H1 (cell line): ENCODE measurements at regions of chr6 and their contacts with region 1.

Region 1: GRCh38 chr6:4920914-4921410 is 82.9 kb downstream of the RPP40 start:
- DNase-seq: no peak
- H3K4me3 ChIP-seq: no peak overlapping the region
- H3K27ac ChIP-seq: no peak overlapping the region
- H3K4me1 ChIP-seq: peaks cover 2 to 20% (median 18%) of the 10 kb centered on the region in 4 experiments; a peak in 6 of 7 replicates
- H3K27me3 ChIP-seq: no peaks in the 10 kb centered on the region
- CTCF ChIP-seq: no peak
- EP300 ChIP-seq: no peak
- POLR2A ChIP-seq: no peak; a peak in 1 of 3 replicates
- RAD21 ChIP-seq: no peak

Region 2: GRCh38 chr6:4714961-4715501 is 205.9 kb before region 1 on chr6:
- CTCF ChIA-PET with region 1: no interaction called
- POLR2A ChIA-PET with region 1: no interaction called
- DNase-seq: peak in 1 of 2 experiments; percentile 20
- H3K4me3 ChIP-seq: no peak overlapping the region
- H3K27ac ChIP-seq: no peak overlapping the region
- H3K4me1 ChIP-seq: no peaks in the 10 kb centered on the region
- H3K27me3 ChIP-seq: no peaks in the 10 kb centered on the region
- CTCF ChIP-seq: no peak
- EP300 ChIP-seq: no peak
- POLR2A ChIP-seq: no peak
- RAD21 ChIP-seq: no peak

Region 3: DNA sequence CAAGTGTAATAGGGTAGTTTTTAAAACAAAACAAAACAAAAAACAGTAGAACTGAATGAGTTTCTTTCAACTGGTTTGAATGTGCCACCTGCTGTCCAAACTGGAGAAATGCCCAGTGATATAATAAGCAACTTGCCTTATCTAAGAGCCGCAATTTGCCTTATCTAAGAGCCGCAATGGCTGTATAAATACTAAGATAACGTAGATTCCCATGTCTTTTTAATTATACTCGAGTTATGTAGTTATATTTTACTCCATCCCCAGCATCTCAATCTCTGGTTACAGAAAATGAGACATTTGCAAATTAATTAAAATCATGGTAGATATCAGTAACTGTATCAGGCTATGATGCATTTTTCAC is 15.7 kb after region 1 on chr6:
- CTCF ChIA-PET with region 1: interaction called, 19 read pairs
- POLR2A ChIA-PET with region 1: no interaction called
- DNase-seq: no peak
- H3K4me3 ChIP-seq: no peak overlapping the region
- H3K27ac ChIP-seq: no peak overlapping the region
- H3K4me1 ChIP-seq: peaks cover 3 to 8% (median 5%) of the 10 kb centered on the region in 4 experiments
- H3K27me3 ChIP-seq: no peaks in the 10 kb centered on the region
- CTCF ChIP-seq: peak in 2 of 3 experiments; percentile 16 to 41; a peak in 2 of 4 replicates
- EP300 ChIP-seq: no peak
- POLR2A ChIP-seq: no peak
- RAD21 ChIP-seq: peak; percentile 58 to 59

Region 4: DNA sequence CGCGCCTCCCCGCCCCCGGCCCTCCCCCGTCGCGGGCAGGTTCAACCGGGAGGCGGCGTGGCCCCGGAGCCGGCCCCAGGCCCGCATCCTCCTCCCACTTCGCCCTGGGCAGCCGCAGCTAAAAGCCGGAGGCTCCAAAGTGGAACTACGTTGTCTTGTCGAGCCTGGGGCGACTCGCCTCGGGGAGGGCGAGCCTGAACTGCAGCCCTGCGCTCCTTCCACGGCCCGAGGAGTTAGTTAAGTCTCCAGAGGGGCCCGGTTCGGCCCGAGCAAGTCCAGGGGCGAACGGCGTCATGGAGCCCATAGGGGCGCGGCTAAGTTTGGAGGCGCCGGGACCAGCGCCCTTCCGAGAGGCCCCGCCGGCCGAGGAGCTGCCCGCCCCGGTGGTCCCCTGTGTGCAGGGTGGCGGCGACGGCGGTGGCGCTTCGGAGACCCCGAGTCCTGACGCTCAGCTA is 164.3 kb after region 1 on chr6 and contains the start of gene PPP1R3G:
- CTCF ChIA-PET with region 1: no interaction called
- POLR2A ChIA-PET with region 1: no interaction called
- DNase-seq: no peak
- H3K4me3 ChIP-seq: peak within 1 kb of the TSS; percentile 25 to 61 (median 50)
- H3K27ac ChIP-seq: no peak within 1 kb of the TSS
- H3K4me1 ChIP-seq: peaks cover 0 to 19% (median 8%) of the 10 kb centered on the region in 4 experiments; a peak in 4 of 7 replicates
- H3K27me3 ChIP-seq: peaks cover 35 to 60% (median 58%) of the 10 kb centered on the region in 4 experiments
- CTCF ChIP-seq: no peak
- EP300 ChIP-seq: no peak
- POLR2A ChIP-seq: no peak
- RAD21 ChIP-seq: no peak
- total RNA-seq, gene PPP1R3G: 0.09 TPM in 1 of 2 replicates, not detected in the other